Heart left ventricle (tissue), 16 donors: ENCODE measurements at regions of chr1 and their contacts with region 1.

Region 1: DNA sequence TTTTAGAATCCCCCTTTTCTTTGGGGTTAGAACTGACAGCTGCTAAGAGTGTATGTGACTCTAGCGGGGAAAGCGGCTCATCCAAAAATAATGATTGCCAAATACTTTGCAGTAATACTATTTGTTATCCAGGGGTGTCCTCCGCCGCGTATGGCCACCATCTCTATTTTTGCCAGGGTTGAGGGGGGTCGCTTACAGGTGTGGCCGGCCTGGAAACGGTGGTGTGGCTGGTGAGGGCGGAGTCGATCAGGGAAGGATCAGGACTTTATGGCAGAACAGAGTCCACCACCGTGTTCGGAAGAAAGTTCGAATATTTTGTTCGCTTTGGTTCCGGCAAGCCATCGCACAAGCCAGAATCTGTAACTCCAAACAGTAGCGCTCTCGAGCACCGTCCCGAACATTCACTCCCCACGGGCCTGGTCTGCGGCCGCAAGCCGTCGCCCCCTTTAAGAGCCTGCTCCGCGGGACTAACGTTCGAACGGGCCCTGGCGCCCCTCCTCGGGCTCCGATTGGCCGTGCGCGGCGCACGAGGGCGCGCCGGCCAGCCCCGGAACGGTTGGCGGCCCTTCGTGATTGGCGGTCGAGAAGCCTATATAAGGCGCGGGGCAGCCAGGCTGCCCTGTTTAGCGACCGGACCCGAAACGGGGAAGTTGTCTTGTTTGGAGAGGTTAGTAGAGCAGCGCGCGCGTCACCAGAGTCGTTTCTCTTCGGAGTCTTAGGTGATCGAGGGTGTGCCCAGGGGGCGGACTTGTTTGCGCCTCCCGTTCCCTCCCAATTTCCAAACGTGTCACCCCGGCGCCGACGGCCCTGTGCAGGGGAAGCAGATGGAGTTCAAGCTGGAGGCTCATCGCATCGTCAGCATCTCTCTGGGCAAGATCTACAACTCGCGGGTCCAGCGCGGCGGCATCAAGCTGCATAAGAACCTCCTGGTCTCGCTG is at the start of gene IER5:
- DNase-seq: peak; percentile 96 to 97 (median 97)
- ATAC-seq: peak; percentile 89 to 95 (median 92)
- H3K4me3 ChIP-seq: peak within 1 kb of the TSS; percentile 65 to 95 (median 88)
- H3K27ac ChIP-seq: peak within 1 kb of the TSS; percentile 82 to 98 (median 94)
- H3K4me1 ChIP-seq: peaks cover 5 to 51% (median 28%) of the 10 kb centered on the region in 12 donors
- H3K27me3 ChIP-seq: no peaks in the 10 kb centered on the region
- CTCF ChIP-seq: peak in 3 of 12 donors; percentile 21 to 23 (median 21)
- POLR2A ChIP-seq: peak; percentile 99 to 100
- total RNA-seq, gene IER5: 12.8 to 22.7 (median 18.4) TPM

Region 2: GRCh38 chr1:180631766-180632325 is 456.5 kb before region 1 on chr1 and contains the start of gene XPR1:
- intact Hi-C with region 1: no loop called
- DNase-seq: peak; percentile 98 to 99 (median 98)
- ATAC-seq: peak; percentile 99 to 100 (median 99)
- H3K4me3 ChIP-seq: peak within 1 kb of the TSS; percentile 69 to 98 (median 87)
- H3K27ac ChIP-seq: peak within 1 kb of the TSS; percentile 77 to 97 (median 91)
- H3K4me1 ChIP-seq: peaks cover 0 to 42% (median 25%) of the 10 kb centered on the region in 12 donors
- H3K27me3 ChIP-seq: no peaks in the 10 kb centered on the region
- CTCF ChIP-seq: peak in 8 of 12 donors; percentile 10 to 51 (median 38)
- POLR2A ChIP-seq: peak; percentile 86 to 98
- total RNA-seq, gene XPR1: 55.4 to 163 (median 62.5) TPM

Region 3: DNA sequence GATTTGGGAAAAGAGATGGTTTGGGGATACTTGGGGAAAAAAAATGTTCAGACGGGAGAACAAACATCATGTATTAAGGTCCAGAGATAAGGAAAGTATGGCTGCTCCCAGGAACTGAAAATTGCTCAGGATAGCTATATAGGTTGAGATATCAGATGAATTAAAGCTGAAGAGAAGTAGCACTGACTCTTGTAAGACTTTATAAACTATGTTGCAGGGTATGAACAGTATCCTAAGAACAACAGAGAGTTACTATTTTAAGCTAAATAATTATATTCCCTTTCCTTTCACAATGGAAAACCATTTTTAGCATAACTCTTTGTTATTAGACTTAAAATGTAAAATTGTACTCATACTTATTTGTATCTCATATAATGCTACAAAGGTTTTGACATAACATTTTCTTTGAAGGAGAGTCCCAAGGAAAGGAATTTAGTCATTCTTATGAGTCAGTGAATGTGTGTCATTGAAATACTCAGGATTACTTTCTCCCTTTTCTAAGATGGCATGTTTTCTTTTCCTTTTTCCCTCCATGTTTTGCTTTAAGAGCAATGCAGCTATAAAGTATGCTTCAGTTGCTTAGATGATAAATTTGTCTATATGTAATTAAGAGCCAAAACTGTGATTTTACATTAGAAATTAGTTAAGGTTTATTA is 315.0 kb before region 1 on chr1:
- intact Hi-C with region 1: no loop called
- DNase-seq: no peak
- ATAC-seq: no peak
- H3K4me3 ChIP-seq: no peak overlapping the region
- H3K27ac ChIP-seq: no peak overlapping the region
- H3K4me1 ChIP-seq: peaks cover 0 to 25% (median 5%) of the 10 kb centered on the region in 12 donors
- H3K27me3 ChIP-seq: no peaks in the 10 kb centered on the region
- CTCF ChIP-seq: no peak
- POLR2A ChIP-seq: no peak

Region 4: GRCh38 chr1:180954005-180954800 is 134.1 kb before region 1 on chr1:
- intact Hi-C with region 1: loop called in 1 of 10 experiments (anchors 10 kb)
- DNase-seq: peak; percentile 64 to 87 (median 79)
- ATAC-seq: peak; percentile 34 to 92 (median 82)
- H3K4me3 ChIP-seq: peak overlapping the region; percentile 40 to 72 (median 58)
- H3K27ac ChIP-seq: peak overlapping the region in 8 of 12 donors; percentile 4 to 79 (median 22)
- H3K4me1 ChIP-seq: peaks cover 0 to 24% (median 11%) of the 10 kb centered on the region in 12 donors
- H3K27me3 ChIP-seq: no peaks in the 10 kb centered on the region
- CTCF ChIP-seq: peak in 3 of 12 donors; percentile 22 to 32 (median 28)
- POLR2A ChIP-seq: no peak

Region 5: DNA sequence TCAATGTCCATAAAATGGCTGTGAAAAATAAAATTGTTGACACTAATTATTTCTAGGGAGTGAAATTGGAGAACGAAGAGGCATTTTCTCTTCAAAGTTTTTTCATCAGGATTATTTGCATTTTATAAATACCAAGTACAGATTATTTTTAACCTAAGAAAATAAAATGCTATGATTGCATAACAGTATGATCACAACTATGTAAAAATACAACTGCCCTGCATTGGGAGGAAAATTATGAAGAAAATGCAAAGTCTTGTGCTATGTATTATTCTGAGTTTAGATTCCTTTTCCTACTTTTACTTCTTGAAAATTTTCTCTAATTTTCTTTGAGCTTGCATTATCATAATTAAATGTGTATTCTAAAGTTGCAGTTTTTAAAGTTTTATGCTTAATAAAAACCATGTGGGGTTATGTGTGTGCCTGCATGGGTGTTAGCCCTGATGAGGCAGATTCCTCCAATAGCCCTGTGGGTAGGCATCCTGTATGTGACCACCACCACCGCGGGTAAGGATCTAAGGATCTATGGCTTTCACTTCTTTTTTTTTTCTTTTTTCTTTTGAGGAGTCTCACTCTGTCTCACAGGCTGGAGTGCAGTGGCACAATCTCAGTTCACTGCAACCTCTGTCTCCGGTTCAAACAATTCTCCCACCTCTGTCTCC is 90.4 kb before region 1 on chr1:
- intact Hi-C with region 1: no loop called
- DNase-seq: no peak
- ATAC-seq: no peak
- H3K4me3 ChIP-seq: no peak overlapping the region
- H3K27ac ChIP-seq: no peak overlapping the region
- H3K4me1 ChIP-seq: no peaks in the 10 kb centered on the region
- H3K27me3 ChIP-seq: no peaks in the 10 kb centered on the region
- CTCF ChIP-seq: no peak
- POLR2A ChIP-seq: no peak

Region 6: GRCh38 chr1:181033799-181034451 is 54.4 kb before region 1 on chr1 and contains the start of gene MR1:
- intact Hi-C with region 1: loop called in 8 of 10 experiments (anchors 2 to 10 kb)
- DNase-seq: peak in 1 of 5 donors; percentile 39
- ATAC-seq: peak; percentile 87 to 92 (median 91)
- H3K4me3 ChIP-seq: peak within 1 kb of the TSS in 11 of 12 donors; percentile 26 to 69 (median 53)
- H3K27ac ChIP-seq: peak within 1 kb of the TSS; percentile 80 to 95 (median 85)
- H3K4me1 ChIP-seq: peaks cover 3 to 61% (median 17%) of the 10 kb centered on the region in 12 donors
- H3K27me3 ChIP-seq: no peaks in the 10 kb centered on the region
- CTCF ChIP-seq: no peak
- POLR2A ChIP-seq: peak in 1 of 2 donors; percentile 63
- total RNA-seq, gene MR1: 2.1 to 21.0 (median 3.8) TPM

Region 7: DNA sequence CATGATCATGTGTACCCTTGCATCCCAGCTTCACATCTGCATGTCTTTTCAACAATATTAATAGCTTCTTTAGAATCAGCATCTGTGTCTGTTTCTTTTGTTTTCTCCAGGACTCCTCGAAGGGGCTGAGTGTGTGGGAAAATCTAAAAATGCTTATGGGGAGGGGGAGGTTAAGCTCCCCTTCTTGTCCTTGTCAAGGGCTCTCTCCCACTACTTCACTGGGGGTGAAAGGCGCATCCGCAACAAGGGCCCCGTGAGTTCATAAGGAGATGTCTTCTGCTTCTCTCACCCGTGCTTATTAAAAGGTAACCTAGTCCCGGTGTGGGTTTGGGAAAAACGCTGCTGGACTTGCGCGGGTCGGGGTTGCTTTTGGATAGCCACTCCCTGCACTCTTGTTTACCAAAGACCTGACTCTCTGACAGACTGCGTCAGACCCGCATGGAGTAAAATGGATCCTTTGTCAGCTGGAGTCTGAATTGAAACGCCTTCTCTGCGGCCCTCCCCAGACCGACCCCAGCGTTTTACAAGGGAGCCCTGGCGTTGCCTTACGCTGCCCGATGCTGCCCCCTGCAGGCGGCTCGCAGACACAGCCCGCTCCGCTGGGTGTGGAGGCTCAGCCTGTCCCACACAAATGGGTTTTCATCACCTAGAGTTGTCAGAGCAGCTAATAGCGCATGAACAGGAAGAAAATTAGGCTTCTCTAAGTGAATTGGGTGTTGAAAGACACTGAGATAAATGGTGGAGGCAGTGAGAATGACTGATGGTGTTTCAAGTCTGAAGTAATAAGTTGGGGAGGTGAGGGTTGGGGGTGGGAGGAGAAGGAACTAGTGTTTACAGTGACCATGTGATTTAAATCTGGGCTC is 54.0 kb after region 1 on chr1:
- intact Hi-C with region 1: loop called (anchors 1 to 2 kb)
- DNase-seq: peak; percentile 86 to 93 (median 88)
- ATAC-seq: peak; percentile 94 to 96 (median 95)
- H3K4me3 ChIP-seq: peak overlapping the region in 9 of 12 donors; percentile 15 to 52 (median 33)
- H3K27ac ChIP-seq: peak overlapping the region in 5 of 12 donors; percentile 1 to 60 (median 30)
- H3K4me1 ChIP-seq: peaks cover 0 to 48% (median 26%) of the 10 kb centered on the region in 12 donors
- H3K27me3 ChIP-seq: no peaks in the 10 kb centered on the region
- CTCF ChIP-seq: peak; percentile 91 to 99 (median 97)
- POLR2A ChIP-seq: no peak

Region 8: DNA sequence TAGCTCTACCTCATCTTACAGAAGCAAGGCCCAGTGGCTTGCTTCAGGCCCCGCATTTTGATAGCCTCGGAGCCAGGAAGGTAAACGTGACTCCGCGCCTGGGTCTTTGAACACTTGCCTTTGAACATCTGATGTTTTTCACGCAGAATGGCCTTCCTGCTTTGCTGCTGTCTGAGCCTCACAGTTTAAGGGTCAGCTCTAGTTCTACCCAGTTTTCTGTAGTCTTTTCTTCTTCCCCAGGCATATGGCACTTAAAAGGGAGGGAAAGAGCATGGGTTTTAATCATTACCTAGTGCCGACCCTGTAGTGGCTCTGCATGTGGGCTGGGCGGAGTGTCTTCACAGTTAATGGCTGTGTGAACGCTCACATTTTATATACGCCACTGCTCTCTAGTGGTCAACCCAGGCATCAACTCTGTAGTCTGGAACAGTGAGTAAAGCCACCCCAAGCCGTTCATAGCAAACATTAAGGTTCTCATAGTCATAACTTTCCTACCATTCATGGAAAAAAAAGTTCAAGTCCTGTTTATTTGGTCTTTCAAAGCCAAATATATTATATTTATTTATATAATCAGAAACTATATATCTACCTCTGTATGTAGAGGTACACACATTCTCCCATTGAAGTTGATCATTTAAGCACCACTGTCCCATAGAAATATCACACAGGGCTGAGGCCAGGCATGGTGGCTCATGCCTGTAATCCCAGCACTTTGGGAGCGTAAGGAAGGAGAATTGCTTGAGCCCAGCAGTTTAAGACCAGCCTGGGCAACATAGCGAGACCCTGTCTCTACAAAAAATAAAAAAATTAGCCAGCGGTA is 78.2 kb after region 1 on chr1:
- intact Hi-C with region 1: loop called in 1 of 10 experiments (anchors 2 kb)
- DNase-seq: peak in 4 of 5 donors; percentile 67 to 75 (median 70)
- ATAC-seq: peak; percentile 92 to 99 (median 97)
- H3K4me3 ChIP-seq: no peak overlapping the region
- H3K27ac ChIP-seq: no peak overlapping the region
- H3K4me1 ChIP-seq: peaks cover 0 to 9% (median 0%) of the 10 kb centered on the region in 12 donors
- H3K27me3 ChIP-seq: no peaks in the 10 kb centered on the region
- CTCF ChIP-seq: peak; percentile 78 to 90 (median 86)
- POLR2A ChIP-seq: no peak